Caco-2 (cell line): ENCODE measurements at regions of chr2 and their contacts with region 1.

Region 1: DNA sequence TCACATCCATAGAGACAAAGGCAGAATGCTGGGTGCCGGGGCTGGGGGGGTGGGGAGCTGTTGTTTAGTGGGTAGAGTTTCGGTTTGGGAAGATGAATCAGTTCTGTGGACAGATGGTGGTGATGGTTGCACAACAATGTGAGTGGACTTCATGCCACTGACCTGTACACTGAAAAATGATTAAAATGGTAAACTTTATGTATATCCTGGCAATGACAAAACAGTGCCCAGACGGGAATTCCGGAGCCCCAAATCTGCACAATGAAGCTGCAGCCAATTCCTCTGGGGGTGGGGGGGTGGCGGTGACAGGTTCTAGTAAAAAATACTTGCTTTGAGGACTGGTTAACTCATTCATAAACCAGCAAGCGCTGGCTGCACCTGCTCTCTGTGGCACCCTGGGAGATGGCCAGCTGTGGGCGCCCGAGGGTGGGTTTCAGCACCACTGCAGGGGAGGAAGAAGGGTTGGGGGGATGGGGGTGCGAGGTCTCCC is 81.8 kb upstream of the HPCAL1 start:
- DNase-seq: no peak
- H3K4me3 ChIP-seq: no peak overlapping the region
- H3K4me3 Mint-ChIP-seq: no peak overlapping the region
- H3K27ac Mint-ChIP-seq: no peak overlapping the region
- H3K4me1 ChIP-seq: peaks cover 17% of the 10 kb centered on the region
- H3K4me1 Mint-ChIP-seq: peaks cover 26% of the 10 kb centered on the region
- H3K27me3 ChIP-seq: no peaks in the 10 kb centered on the region
- H3K27me3 Mint-ChIP-seq: no peaks in the 10 kb centered on the region
- CTCF ChIP-seq: no peak

Region 2: DNA sequence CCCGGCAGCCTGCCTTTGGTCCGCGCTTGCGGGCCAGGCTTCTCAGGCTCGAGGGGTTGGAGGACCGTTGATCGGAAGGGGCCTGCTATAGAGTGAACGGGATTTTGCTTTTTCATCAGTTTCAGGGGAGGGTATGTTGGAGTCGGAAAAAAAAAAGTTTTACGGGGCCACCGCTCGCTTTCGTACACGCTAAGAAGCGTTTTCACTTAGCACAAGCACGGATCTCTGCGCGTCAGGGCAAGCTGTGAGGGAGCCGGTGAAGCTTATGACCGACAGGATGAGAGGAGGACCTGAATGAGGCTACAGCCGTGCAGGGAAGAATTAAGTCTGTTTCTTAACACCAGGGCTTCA is 797.0 kb before region 1 on chr2:
- CTCF ChIA-PET with region 1: no interaction called
- POLR2A ChIA-PET with region 1: no interaction called
- intact Hi-C with region 1: no loop called
- DNase-seq: no peak
- H3K4me3 ChIP-seq: peak overlapping the region; percentile 89
- H3K4me3 Mint-ChIP-seq: no peak overlapping the region
- H3K27ac Mint-ChIP-seq: no peak overlapping the region
- H3K4me1 ChIP-seq: peaks cover 9% of the 10 kb centered on the region
- H3K4me1 Mint-ChIP-seq: peaks cover 18% of the 10 kb centered on the region
- H3K27me3 ChIP-seq: no peaks in the 10 kb centered on the region
- H3K27me3 Mint-ChIP-seq: no peaks in the 10 kb centered on the region
- CTCF ChIP-seq: no peak

Region 3: DNA sequence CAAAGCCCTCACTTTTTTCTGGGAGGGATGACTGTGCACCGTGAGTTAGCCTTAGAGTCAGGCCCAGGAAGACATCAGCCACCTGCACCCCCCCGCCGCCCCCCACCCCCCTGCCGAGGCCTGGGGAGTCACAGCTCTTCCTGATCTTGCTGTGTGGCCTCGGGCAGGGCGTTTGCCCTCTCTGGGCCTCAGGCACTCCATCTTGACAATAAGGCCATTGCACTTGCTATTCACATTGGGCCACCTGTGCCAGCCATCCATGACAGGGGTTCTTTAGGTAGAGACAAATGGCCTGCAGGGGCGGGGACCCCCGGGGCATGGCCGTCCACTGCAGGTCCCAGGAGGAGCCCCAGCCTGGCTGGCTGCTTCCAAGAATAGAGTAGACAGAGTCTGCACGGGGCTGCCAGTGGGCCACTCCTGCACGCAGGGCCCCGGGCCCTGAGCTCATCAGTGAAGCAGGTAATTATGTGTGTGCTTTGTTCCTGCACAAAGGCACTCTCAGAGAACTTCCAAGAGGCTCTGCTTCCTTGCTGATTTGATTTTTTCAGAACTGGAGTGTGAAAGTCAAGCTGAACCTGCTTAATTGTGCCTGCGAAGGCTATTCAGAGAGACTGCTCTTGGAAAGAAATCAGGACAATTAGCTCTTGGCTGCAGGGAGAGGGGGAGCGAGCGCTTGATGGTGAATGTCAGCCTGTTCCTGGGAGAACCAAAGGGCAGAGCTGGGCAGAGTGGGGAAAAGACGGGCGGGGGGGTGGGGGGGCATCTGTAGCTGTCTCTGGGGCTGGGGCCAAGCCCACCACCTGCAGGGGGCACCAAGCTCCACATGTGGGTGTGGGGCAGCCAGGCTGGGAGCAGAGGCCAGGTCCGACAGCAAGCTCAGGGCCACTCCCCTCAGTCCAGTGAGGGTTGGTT is 58.1 kb before region 1 on chr2:
- CTCF ChIA-PET with region 1: no interaction called
- POLR2A ChIA-PET with region 1: no interaction called
- intact Hi-C with region 1: loop called (anchors 10 kb)
- DNase-seq: peak in 1 of 2 experiments; percentile 72
- H3K4me3 ChIP-seq: no peak overlapping the region
- H3K4me3 Mint-ChIP-seq: no peak overlapping the region
- H3K27ac Mint-ChIP-seq: no peak overlapping the region
- H3K4me1 ChIP-seq: peaks cover 8% of the 10 kb centered on the region
- H3K4me1 Mint-ChIP-seq: peaks cover 7% of the 10 kb centered on the region
- H3K27me3 ChIP-seq: no peaks in the 10 kb centered on the region
- H3K27me3 Mint-ChIP-seq: no peaks in the 10 kb centered on the region
- CTCF ChIP-seq: peak; percentile 42 to 47